Caco-2 (cell line): ENCODE measurements at regions of chr5 and their contacts with region 1.

Region 1: DNA sequence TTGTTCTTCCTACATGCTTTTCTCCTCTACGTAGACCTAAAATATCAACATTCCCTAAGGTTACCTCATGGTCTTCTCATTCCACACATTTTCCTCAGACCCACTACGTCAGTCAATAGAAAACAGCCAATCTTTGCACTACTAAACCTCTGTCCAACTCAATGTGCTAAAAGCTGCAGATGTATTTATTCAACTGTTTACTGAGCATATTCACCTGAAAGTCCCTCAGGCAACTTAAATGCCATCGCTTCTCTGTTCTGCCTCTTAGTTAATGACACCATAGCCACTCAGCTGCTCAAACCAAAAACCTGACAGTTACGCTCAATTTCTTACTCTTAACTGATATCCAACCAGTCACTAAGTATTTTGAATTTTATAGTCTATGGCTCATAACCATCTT is 75.1 kb downstream of the SSBP2 start:
- DNase-seq: no peak
- H3K4me3 ChIP-seq: no peak overlapping the region
- H3K4me3 Mint-ChIP-seq: no peak overlapping the region
- H3K27ac Mint-ChIP-seq: no peak overlapping the region
- H3K4me1 ChIP-seq: no peaks in the 10 kb centered on the region
- H3K4me1 Mint-ChIP-seq: no peaks in the 10 kb centered on the region
- H3K27me3 ChIP-seq: no peaks in the 10 kb centered on the region
- H3K27me3 Mint-ChIP-seq: no peaks in the 10 kb centered on the region
- CTCF ChIP-seq: no peak

Region 2: GRCh38 chr5:81657389-81657788 is 18.5 kb before region 1 on chr5:
- CTCF ChIA-PET with region 1: no interaction called
- POLR2A ChIA-PET with region 1: no interaction called
- intact Hi-C with region 1: loop called (anchors 1 kb)
- DNase-seq: no peak
- H3K4me3 ChIP-seq: no peak overlapping the region
- H3K4me3 Mint-ChIP-seq: no peak overlapping the region
- H3K27ac Mint-ChIP-seq: no peak overlapping the region
- H3K4me1 ChIP-seq: no peaks in the 10 kb centered on the region
- H3K4me1 Mint-ChIP-seq: no peaks in the 10 kb centered on the region
- H3K27me3 ChIP-seq: no peaks in the 10 kb centered on the region
- H3K27me3 Mint-ChIP-seq: peaks cover 8% of the 10 kb centered on the region
- CTCF ChIP-seq: no peak